Testis (tissue), 5 donors: ENCODE measurements at regions of chr17 and their contacts with region 1.

Region 1: DNA sequence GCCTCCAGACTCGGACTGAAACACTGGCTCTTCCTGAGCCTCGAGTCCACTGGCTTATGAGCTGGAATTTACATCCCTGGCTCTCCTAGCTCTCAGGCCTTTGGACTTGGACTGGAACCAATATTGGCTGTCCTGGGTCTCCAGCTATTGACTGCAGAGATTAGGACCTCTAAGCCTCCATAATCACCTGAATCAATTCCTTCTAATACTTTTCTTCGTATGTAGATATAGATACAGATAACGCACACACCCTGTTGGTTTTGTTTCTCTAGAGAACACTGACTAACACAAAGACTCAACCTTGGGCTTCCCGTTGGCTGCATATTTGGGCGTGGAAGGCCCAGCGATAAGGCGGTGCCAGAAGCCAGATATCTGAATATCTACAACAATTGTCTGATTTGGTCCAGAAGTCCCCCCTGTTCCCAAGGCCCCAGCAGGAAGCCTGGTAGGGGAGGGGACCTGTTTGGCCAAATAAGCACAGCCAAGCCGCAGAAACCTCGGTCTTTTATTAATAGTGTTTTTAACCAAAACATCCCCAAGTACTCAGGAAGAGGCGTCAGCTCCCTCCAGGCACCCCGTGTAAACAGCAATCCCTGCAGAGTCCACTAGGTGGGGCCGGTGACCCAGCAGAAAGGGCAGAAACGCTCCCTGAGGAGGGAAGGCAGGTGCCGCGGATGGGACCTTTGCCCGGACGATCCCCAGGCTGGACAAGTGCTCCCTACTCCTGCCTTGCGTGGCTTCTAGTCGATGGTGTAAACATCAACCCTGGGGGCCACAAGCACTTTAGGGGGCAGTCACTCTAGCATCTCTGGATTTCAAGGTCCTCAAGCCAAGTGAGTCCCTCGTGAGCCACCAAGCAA is 57.0 kb downstream of the ABR start:
- DNase-seq: peak; percentile 85
- H3K4me3 ChIP-seq: no peak overlapping the region
- H3K27ac ChIP-seq: peak overlapping the region; percentile 10 to 71
- H3K4me1 ChIP-seq: peaks cover 9% of the 10 kb centered on the region
- H3K27me3 ChIP-seq: no peaks in the 10 kb centered on the region
- CTCF ChIP-seq: peak; percentile 84 to 90 (median 85)
- POLR2A ChIP-seq: no peak

Region 2: DNA sequence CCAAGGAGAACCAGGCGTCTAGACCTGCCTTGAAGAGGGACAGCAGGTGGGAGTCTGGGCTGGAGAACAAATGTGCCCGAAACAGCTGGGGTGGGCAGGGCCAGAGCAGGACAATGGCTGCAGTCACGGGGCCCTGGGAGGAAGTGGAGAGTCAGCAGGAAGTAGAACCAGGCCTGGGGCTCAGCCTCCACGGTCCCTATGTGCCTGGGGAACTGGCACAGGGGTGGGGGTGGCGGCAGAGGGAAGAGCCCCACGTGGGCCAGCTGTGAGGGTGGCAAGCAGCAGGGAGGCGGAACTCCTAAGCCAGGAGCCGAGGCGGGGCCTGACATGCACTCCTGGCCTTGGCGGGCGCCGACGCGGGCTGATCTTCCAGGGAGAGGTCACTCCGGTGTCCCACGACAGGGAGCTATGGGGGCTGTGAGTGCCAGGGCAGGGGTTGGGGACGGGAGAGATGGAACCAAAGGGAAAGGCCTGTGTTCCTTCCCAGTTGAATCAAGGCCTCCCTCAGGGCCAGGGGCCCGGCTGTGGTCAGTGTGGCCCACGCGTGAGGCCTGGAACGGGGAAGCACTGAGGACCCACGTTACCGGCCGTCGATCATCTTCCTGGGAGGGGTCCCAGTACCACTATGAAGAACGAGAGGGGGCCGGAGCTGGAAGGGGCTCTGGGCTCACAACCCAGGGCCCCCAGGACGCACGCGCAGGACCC is 83.1 kb before region 1 on chr17:
- intact Hi-C with region 1: no loop called
- DNase-seq: peak; percentile 53
- H3K4me3 ChIP-seq: no peak overlapping the region
- H3K27ac ChIP-seq: peak overlapping the region in 1 of 2 donors; percentile 44
- H3K4me1 ChIP-seq: peaks cover 12% of the 10 kb centered on the region
- H3K27me3 ChIP-seq: no peaks in the 10 kb centered on the region
- CTCF ChIP-seq: no peak
- POLR2A ChIP-seq: no peak

Region 3: DNA sequence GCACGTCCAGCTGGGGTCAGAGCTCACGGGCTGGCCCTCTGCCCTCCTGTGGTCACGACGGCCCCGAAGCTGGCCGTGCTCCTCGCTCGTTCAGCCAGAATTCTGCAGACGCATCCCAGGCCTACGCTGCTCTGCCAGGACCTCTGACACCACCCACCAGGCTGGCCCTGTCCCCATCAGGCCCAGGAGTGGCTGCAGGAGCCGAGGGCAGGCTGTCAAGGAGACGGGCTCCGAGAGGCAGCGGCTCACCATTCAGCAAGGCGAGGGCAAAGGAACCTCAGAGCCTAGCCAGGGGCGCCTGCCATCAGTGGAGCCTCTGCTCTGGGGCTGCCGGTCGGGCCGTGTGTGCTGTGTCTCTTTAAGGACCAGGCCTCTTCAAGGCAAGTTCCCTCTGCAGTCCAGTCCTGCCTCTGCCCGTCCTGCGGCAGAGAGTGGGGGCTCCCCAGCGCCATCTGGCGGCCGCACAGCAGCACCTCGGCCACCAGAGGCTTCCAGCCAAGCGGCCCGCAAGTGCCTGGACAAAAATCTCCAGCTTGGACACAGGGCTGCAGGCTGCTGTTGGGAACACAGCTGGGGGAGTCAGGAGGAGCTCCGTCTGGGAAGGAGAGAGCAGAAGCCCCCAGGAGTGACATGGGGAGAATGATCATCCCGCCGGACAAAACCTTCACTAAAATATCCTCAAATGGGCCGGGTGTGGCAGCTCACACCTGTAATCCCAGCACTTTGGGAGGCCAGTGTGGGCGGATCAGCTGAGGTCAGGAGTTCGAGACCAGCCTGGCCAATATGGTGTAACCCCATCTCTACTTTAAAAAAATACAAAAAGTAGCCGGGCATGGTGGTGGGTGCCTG is 64.4 kb after region 1 on chr17:
- intact Hi-C with region 1: loop called (anchors 10 kb)
- DNase-seq: peak; percentile 87
- H3K4me3 ChIP-seq: no peak overlapping the region
- H3K27ac ChIP-seq: peak overlapping the region; percentile 52 to 76
- H3K4me1 ChIP-seq: peaks cover 29% of the 10 kb centered on the region
- H3K27me3 ChIP-seq: no peaks in the 10 kb centered on the region
- CTCF ChIP-seq: peak; percentile 91 to 94 (median 92)
- POLR2A ChIP-seq: no peak